GM13977 (cell line): ENCODE measurements at regions of chr12 and their contacts with region 1.

Region 1: GRCh38 chr12:91388552-91388965 is 205.9 kb upstream of the DCN start:
- DNase-seq: no peak
- CTCF ChIP-seq: no peak

Region 2: GRCh38 chr12:92649511-92650227 is 1261.1 kb after region 1 on chr12:
- in situ Hi-C with region 1: loop called (anchors 5 kb)
- DNase-seq: peak; percentile 71
- CTCF ChIP-seq: peak; percentile 77